Mammary epithelial cell (primary cell): ENCODE measurements at regions of chr19 and their contacts with region 1.

Region 1: DNA sequence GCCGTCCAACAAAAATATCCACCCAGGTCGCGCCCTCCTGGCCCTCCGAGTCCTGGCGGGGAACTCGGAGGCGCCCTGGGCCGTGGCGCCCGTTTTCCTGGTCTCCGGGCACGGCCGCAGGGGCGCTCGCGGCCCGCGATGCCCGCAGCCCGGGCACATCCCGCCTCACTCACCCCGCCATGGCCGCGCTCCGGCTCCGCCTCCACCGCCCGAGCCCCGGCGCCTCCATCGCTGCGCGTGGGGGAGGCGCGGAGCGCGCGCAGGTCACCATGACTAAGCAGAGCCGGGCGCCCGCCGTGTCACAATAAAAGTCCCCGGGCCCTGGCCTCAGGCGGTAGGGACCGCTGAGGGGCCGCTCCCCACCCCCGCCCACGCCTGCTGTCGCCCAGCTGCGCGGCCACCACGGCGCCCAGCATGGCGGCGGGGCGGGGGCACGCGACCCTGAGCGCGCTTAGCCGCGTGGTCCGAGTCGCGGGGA is 593 bp downstream of the KEAP1 start:
- DNase-seq: peak; percentile 81
- H3K4me3 ChIP-seq: peak overlapping the region; percentile 77 to 94 (median 89)
- H3K27ac ChIP-seq: peak overlapping the region; percentile 70
- H3K4me1 ChIP-seq: peaks cover 11% of the 10 kb centered on the region
- H3K27me3 ChIP-seq: no peaks in the 10 kb centered on the region
- CTCF ChIP-seq: peak in 1 of 2 donors; percentile 20

Region 2: DNA sequence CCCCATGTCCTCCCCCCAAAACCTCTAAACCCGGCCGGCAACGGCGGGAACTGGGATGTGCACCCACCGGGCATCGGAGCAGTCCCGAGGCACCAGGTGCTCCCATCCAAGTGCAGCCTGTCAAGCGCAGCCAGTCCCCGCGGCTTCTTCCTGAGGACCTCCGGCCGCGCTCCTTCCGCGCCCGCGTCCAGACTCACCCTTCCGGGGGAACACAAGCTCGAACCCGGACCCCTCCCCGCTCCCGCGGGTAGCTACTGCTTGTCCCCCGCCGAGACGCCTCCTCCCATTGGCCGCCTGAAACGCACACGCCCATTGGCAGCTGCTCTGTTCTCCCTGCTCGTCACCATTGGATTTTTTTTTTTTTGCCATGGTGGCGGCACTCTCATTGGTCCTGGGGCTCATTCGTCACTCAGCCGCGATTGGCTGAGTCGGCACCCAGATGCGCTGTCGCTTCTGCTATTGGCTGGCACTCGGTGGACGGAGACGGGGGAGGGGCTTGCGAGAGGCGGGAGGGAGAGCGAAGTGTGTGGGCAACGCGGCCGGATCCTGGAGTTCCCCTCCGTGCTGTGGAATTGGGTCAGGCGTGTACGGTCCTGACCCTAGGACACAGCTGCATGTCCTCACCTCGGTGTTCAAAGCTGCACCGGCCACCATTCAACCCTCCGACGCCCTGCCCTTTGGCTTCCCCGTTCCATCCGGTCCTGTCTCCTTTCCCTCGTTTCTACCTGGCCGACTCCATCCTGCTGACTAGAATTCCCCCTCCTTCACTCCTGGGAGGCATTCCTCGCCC is 122.1 kb before region 1 on chr19 and contains the start of gene TYK2:
- CTCF ChIA-PET with region 1: no interaction called
- dilution Hi-C with region 1: no loop called
- in situ Hi-C with region 1: no loop called
- intact Hi-C with region 1: no loop called
- DNase-seq: peak; percentile 99
- H3K4me3 ChIP-seq: peak within 1 kb of the TSS; percentile 81 to 99 (median 92)
- H3K27ac ChIP-seq: peak within 1 kb of the TSS; percentile 65
- H3K4me1 ChIP-seq: peaks cover 11% of the 10 kb centered on the region
- H3K27me3 ChIP-seq: no peaks in the 10 kb centered on the region
- CTCF ChIP-seq: no peak
- total RNA-seq, gene TYK2: 43.5 to 110 TPM

Region 3: DNA sequence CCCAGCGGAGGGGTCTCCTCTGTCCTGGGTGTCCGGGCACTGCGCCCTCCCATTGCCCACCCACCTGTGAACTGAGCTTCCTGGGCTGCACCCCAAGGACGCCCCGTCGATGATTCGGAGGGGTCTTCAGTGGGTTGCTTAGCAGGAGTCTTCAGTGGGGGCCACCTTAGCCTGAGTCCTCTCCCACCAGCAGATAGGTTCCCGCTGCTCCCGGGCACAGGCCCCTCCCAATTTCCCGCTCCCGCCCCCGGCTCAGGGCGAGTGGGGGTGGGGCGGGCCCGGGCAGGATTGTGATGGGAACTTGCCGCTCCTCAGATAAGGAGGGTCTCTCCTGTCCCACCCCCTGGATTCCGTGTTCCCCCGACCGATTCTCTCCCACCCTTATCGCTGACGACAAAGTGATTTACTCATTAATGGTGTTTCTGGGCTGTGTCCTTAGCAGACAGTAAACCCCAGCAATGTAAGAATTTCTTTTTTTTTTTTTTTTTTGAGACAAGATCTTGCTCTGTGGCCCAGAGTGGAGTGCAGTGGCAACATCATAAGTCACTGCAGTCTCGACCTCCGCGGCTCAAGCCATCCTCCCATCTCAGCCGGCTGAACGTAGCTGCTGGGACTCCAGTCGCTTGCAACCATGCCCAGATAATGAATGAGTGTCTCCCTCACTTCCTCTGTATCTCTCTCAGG is 15.3 kb after region 1 on chr19:
- CTCF ChIA-PET with region 1: interaction called, 4 read pairs
- dilution Hi-C with region 1: no loop called
- in situ Hi-C with region 1: no loop called
- intact Hi-C with region 1: loop called (anchors 2 kb)
- DNase-seq: no peak
- H3K4me3 ChIP-seq: peak overlapping the region; percentile 65 to 69 (median 66)
- H3K27ac ChIP-seq: no peak overlapping the region
- H3K4me1 ChIP-seq: peaks cover 24% of the 10 kb centered on the region
- H3K27me3 ChIP-seq: no peaks in the 10 kb centered on the region
- CTCF ChIP-seq: no peak

Region 4: GRCh38 chr19:10533646-10534386 is 31.3 kb after region 1 on chr19:
- CTCF ChIA-PET with region 1: no interaction called
- dilution Hi-C with region 1: no loop called
- in situ Hi-C with region 1: no loop called
- intact Hi-C with region 1: loop called (anchors 1 kb)
- DNase-seq: peak; percentile 83
- H3K4me3 ChIP-seq: no peak overlapping the region
- H3K27ac ChIP-seq: no peak overlapping the region
- H3K4me1 ChIP-seq: peaks cover 17% of the 10 kb centered on the region
- H3K27me3 ChIP-seq: no peaks in the 10 kb centered on the region
- CTCF ChIP-seq: no peak

Region 5: GRCh38 chr19:10543420-10544241 is 41.1 kb after region 1 on chr19 and contains the start of gene ATG4D:
- CTCF ChIA-PET with region 1: interaction called, 3 read pairs
- dilution Hi-C with region 1: no loop called
- in situ Hi-C with region 1: no loop called
- intact Hi-C with region 1: loop called (anchors 2 kb)
- DNase-seq: peak; percentile 68
- H3K4me3 ChIP-seq: peak within 1 kb of the TSS; percentile 69 to 82 (median 82)
- H3K27ac ChIP-seq: peak within 1 kb of the TSS; percentile 57
- H3K4me1 ChIP-seq: peaks cover 6% of the 10 kb centered on the region
- H3K27me3 ChIP-seq: no peaks in the 10 kb centered on the region
- CTCF ChIP-seq: no peak
- total RNA-seq, gene ATG4D: 20.7 to 28.9 TPM

Region 6: GRCh38 chr19:10551698-10552301 is 49.2 kb after region 1 on chr19:
- CTCF ChIA-PET with region 1: no interaction called
- dilution Hi-C with region 1: no loop called
- in situ Hi-C with region 1: loop called in 1 of 2 experiments (anchors 10 kb)
- intact Hi-C with region 1: loop called (anchors 1 kb)
- DNase-seq: peak; percentile 51
- H3K4me3 ChIP-seq: no peak overlapping the region
- H3K27ac ChIP-seq: no peak overlapping the region
- H3K4me1 ChIP-seq: peaks cover 39% of the 10 kb centered on the region
- H3K27me3 ChIP-seq: no peaks in the 10 kb centered on the region
- CTCF ChIP-seq: peak; percentile 39 to 56

Region 7: DNA sequence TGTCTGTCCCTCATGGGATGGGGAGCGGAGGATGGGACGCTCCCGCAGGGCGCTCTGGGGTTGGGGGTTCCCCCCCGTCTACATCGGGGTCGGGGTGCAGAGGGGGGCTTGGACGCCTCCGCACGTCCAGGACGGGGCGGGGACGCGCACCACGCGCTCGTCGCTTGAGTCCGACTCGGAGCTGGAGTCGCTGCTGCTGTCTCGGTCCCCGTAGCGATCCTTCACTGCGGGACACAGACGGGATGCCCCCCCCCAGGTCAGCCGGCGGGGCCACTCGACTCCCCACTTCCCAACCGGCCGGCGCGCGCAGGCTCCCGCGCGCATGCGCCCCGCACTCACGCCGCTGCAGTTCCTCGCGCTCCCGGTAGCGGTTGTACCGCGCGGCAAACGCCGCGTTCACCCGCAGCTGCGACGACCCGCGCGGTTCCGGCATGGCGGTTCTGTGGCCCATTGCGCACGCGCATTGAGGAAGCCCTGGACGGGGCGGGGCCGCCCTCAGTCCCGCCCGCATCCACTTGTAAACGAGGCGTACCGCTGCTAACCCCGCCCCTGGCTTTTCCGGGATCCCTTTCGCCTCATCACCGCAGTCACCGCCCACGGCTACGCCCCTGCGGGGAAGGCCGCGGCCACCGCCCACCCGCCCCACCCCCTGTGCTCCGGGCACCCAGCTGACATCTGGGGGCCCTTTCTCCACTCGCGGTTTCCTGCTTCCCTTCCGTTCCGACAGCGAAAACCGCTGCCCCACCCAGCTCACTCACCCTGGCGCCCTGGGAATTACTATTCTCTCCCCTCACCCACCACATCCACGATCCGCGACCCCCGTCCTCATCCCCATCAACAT is 63.2 kb after region 1 on chr19 and contains the start of gene KRI1:
- CTCF ChIA-PET with region 1: no interaction called
- dilution Hi-C with region 1: no loop called
- in situ Hi-C with region 1: loop called in 1 of 2 experiments (anchors 5 kb)
- intact Hi-C with region 1: loop called (anchors 1 kb)
- DNase-seq: peak; percentile 94
- H3K4me3 ChIP-seq: peak within 1 kb of the TSS; percentile 90 to 95 (median 92)
- H3K27ac ChIP-seq: peak within 1 kb of the TSS; percentile 53
- H3K4me1 ChIP-seq: peaks cover 39% of the 10 kb centered on the region
- H3K27me3 ChIP-seq: no peaks in the 10 kb centered on the region
- CTCF ChIP-seq: peak; percentile 16 to 42
- total RNA-seq, gene KRI1: 10.3 to 32.7 TPM

Region 8: GRCh38 chr19:10653715-10654492 is 151.3 kb after region 1 on chr19 and contains the start of gene ILF3:
- CTCF ChIA-PET with region 1: interaction called, 5 read pairs
- dilution Hi-C with region 1: no loop called
- in situ Hi-C with region 1: no loop called
- intact Hi-C with region 1: loop called (anchors 5 kb)
- DNase-seq: peak; percentile 100
- H3K4me3 ChIP-seq: peak within 1 kb of the TSS; percentile 87 to 99 (median 98)
- H3K27ac ChIP-seq: peak within 1 kb of the TSS; percentile 97
- H3K4me1 ChIP-seq: peaks cover 8% of the 10 kb centered on the region
- H3K27me3 ChIP-seq: no peaks in the 10 kb centered on the region
- CTCF ChIP-seq: no peak
- total RNA-seq, gene ILF3: 75.5 to 252 TPM